ENCODE measurements at regions of chr6 and their contacts with region 1.

Region 1: DNA sequence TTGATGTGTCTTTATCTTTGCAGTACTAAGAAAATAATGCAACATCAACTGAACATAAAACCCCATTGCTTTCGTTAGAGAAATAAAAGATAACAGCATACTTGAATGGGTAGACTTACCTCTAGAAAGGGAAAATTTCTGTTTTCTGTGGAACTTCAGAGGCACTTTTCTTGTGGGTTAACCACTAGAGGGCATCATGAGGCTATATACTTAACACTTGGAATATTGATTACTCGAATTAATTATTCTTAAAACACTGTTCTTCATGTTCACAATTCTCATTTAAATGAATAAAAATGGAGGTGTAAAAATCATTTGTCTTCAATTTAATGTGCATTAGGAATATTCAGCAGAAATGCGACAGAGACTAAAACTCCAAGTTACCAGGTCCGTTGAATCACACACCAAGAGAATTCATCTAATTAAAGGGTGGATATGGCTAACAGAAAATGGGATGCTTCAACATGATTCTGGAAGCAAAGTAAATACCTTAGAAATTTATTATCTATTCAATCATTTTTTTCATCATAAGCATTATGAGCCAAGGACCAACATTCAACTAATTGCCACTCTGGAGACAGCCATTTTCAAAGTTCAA is 330.8 kb upstream of the PREP start:
- DNase-seq: peak; percentile 5
- ATAC-seq: no peak
- H3K4me3 ChIP-seq: no peak overlapping the region
- H3K27ac ChIP-seq: no peak overlapping the region
- H3K4me1 ChIP-seq: no peaks in the 10 kb centered on the region
- H3K27me3 ChIP-seq: no peaks in the 10 kb centered on the region
- CTCF ChIP-seq: peak; percentile 39
- EP300 ChIP-seq: no peak
- POLR2A ChIP-seq: no peak
- RAD21 ChIP-seq: no peak

Region 2: DNA sequence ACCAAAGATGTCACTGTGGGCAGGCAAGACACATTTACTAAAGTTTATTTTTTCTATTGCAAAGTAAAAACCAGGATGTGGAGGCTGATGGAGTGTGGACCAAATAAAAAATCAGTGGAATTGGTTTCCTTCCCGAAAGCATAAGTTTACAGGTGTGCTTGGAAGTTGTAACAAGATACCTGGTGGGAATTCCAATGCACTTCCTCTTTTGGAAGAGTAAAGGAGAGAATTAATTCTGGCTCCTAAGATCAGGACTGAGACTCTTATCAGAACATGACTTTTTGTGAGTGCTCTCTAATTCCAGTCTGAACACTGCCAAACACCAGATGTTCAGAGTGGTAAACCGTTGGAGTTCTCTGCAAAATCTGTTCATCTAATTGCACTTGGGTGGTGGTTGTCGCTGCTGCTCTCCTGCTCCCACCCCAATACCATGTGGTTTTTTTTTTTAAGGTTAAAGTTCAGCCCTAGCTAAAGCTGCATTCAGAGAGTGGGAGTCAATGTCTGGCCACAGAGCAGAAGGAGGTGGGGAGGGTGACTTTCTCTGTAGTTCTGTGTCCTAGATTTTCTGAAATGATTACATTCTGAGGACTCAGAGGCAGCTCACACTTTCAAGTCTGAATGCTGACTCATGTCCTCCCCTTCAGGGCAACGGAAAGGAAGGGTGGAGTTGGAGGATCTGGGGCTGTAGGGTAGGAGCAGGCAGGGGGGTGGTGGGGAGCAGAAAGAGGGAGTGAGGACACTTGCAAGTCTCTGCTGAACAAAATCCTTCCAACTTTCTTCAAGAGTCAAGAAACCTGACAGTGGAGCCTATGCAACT is 76.6 kb after region 1 on chr6:
- CTCF ChIA-PET with region 1: no interaction called
- POLR2A ChIA-PET with region 1: no interaction called
- in situ Hi-C with region 1: no loop called
- intact Hi-C with region 1: no loop called
- DNase-seq: no peak
- ATAC-seq: no peak
- H3K4me3 ChIP-seq: no peak overlapping the region
- H3K27ac ChIP-seq: no peak overlapping the region
- H3K4me1 ChIP-seq: no peaks in the 10 kb centered on the region
- H3K27me3 ChIP-seq: no peaks in the 10 kb centered on the region
- CTCF ChIP-seq: no peak
- EP300 ChIP-seq: no peak
- POLR2A ChIP-seq: no peak
- RAD21 ChIP-seq: no peak

Region 3: DNA sequence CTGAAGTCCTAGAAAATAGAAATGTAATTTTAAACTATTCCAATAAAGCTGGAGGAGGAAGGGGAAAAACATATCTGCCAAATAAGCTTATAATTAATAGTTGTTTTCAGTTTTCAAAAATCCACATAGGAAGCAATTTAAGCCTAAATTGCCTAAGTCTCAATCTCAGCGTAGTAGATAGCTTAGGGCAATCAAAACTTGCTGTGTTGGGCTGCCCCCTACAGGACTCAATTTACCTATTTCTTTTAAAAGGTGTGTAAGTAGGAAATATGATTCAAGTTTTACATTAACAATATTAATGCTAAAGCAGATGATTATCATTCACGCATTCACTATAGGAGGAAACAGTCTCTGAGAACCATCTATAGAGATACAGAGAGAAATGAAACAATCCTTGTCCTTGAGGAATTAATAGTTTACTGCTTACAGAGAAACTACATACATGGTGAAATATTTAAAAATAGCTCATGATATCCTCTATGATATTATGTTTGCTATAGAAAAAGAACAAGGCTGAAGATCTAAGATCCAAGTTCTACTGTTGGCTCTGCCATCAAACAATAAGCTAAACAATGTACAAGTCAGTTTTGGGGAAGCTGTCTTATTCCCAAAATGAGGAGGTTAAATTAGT is 489.8 kb after region 1 on chr6:
- CTCF ChIA-PET with region 1: interaction called, 3 read pairs
- POLR2A ChIA-PET with region 1: no interaction called
- in situ Hi-C with region 1: loop called (anchors 25 kb)
- intact Hi-C with region 1: no loop called
- DNase-seq: peak; percentile 46
- ATAC-seq: peak; percentile 71
- H3K4me3 ChIP-seq: no peak overlapping the region
- H3K27ac ChIP-seq: no peak overlapping the region
- H3K4me1 ChIP-seq: peaks cover 13% of the 10 kb centered on the region
- H3K27me3 ChIP-seq: no peaks in the 10 kb centered on the region
- CTCF ChIP-seq: peak; percentile 62
- EP300 ChIP-seq: no peak
- POLR2A ChIP-seq: no peak
- RAD21 ChIP-seq: 0 out of 2 replicates have a peak, but pooled peaks have one; percentile 37

Measured in HepG2 (cell line).